Activated CD4-positive, alpha-beta T cell treated with anti-CD3 and anti-CD28 coated beads for 36 hours (primary cell): ENCODE measurements at regions of chr6 and their contacts with region 1.

Region 1: GRCh38 chr6:34196126-34196830 is 40.4 kb upstream of the HMGA1 start:
- DNase-seq: peak; percentile 93
- ATAC-seq: peak; percentile 94
- H3K4me3 Mint-ChIP-seq: peak overlapping the region; percentile 73
- H3K27ac Mint-ChIP-seq: peak overlapping the region; percentile 80
- H3K4me1 Mint-ChIP-seq: peaks cover 11% of the 10 kb centered on the region
- H3K27me3 Mint-ChIP-seq: no peaks in the 10 kb centered on the region

Region 2: DNA sequence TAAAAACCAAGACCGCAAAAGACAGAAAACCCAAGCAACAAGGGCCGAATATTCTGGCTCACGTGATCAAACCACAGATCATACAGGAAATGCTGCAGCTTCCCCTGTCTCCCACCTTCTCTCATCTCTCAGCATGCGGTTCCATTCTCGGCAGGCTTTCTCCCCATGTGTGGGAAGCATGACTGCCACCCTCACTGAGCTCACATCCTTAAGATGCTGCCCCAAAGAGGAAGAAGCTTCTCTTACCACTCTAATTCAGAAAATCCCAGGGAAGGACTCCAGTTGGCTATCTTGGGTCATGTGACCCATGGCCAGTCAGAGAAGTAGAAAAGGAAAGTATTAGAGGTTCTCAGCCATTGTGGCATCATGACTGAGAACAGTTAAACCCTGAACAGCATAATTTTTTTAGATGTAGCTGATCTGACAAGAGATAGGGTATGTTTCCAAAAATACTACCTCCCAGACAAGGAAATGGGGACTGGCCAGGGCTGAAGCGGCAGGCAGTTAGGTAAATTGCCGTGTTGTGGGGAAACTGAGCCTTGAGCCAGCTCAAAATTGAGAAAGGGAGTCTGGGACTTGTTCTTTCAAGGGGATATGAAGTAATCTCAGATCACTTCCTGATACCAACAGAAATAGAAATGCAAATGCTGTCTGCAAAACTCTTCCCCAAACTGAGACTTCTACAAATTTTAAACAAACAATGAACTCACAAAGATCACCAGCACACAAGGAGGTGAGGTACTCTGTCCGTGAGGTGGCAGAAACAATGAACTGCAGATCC is 13.3 kb before region 1 on chr6:
- CTCF ChIA-PET with region 1: interaction called, 20 read pairs
- POLR2A ChIA-PET with region 1: interaction called, 4 read pairs
- intact Hi-C with region 1: no loop called
- DNase-seq: peak; percentile 78
- ATAC-seq: peak; percentile 95
- H3K4me3 Mint-ChIP-seq: peak overlapping the region; percentile 65
- H3K27ac Mint-ChIP-seq: peak overlapping the region; percentile 95
- H3K4me1 Mint-ChIP-seq: peaks cover 20% of the 10 kb centered on the region
- H3K27me3 Mint-ChIP-seq: no peaks in the 10 kb centered on the region

Region 3: DNA sequence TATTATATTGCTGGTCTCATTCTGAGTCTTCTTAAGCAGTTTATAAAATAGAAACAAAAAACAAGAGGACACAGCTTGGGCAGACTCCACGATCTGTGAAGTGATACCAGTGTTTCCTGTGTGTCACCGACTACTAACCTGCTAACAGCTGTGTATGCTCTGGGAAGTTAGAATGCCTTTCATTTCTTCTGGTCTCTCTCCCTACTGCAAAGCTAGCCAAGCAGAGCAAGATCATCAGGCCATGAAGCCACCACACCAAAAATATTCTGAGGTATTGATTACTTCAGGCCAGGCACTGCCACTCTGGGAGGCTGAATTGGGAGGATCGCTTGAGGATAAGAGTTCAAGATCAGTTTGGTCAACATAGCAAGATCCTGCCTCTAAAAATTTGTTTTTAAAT is 99.4 kb after region 1 on chr6:
- CTCF ChIA-PET with region 1: no interaction called
- POLR2A ChIA-PET with region 1: no interaction called
- intact Hi-C with region 1: no loop called
- DNase-seq: peak; percentile 16
- ATAC-seq: peak; percentile 74
- H3K4me3 Mint-ChIP-seq: no peak overlapping the region
- H3K27ac Mint-ChIP-seq: peak overlapping the region; percentile 1
- H3K4me1 Mint-ChIP-seq: peaks cover 8% of the 10 kb centered on the region
- H3K27me3 Mint-ChIP-seq: no peaks in the 10 kb centered on the region

Region 4: GRCh38 chr6:34312259-34312658 is 116.0 kb after region 1 on chr6:
- CTCF ChIA-PET with region 1: no interaction called
- POLR2A ChIA-PET with region 1: no interaction called
- intact Hi-C with region 1: no loop called
- DNase-seq: no peak
- ATAC-seq: no peak
- H3K4me3 Mint-ChIP-seq: no peak overlapping the region
- H3K27ac Mint-ChIP-seq: no peak overlapping the region
- H3K4me1 Mint-ChIP-seq: peaks cover 32% of the 10 kb centered on the region
- H3K27me3 Mint-ChIP-seq: no peaks in the 10 kb centered on the region

Region 5: DNA sequence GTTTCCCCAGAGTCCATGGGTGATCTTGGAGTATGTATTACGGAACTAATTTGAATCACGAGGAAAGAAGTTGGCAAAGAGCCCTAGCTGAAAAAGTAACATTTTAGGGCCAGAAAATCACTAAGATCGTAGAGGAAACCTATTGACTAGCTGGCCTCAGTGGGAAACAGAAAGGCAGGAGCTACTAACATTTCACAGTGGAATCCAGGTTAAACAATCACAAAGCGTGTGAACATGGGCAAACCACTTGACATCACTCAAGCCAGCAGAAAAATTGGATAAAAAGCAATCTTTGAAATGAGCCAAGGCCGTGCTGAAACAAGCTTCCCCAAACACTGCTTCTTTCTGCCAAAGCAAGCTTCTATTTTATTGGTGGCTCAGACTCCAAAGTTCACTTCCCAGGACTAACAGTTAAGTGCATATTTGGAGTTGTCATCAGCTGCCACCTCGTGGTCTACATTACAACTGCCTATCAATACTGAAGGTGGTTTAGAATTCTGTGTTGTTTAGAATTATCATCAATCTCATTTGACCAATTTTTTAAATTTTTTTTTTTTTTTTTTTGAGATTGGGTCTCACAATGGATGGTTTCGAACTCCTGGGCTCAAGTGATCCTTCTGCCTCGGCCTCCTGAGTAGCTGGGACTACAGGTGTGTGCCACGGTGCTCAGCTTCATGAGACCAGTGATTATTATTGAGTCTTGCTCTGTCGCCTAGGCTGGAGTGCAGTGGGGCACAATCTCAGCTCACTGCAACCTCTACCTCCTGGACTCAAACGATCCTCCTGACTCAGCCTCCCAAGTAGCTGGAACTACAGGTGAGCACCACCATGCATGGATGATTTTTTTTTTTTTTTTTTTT is 219.0 kb after region 1 on chr6:
- CTCF ChIA-PET with region 1: interaction called, 16 read pairs
- POLR2A ChIA-PET with region 1: no interaction called
- intact Hi-C with region 1: loop called (anchors 1 kb)
- DNase-seq: peak; percentile 48
- ATAC-seq: peak; percentile 57
- H3K4me3 Mint-ChIP-seq: no peak overlapping the region
- H3K27ac Mint-ChIP-seq: peak overlapping the region; percentile 51
- H3K4me1 Mint-ChIP-seq: peaks cover 15% of the 10 kb centered on the region
- H3K27me3 Mint-ChIP-seq: no peaks in the 10 kb centered on the region

Region 6: GRCh38 chr6:35391240-35391968 is 1195.1 kb after region 1 on chr6:
- CTCF ChIA-PET with region 1: no interaction called
- POLR2A ChIA-PET with region 1: no interaction called
- intact Hi-C with region 1: no loop called
- DNase-seq: no peak
- ATAC-seq: peak; percentile 37
- H3K4me3 Mint-ChIP-seq: no peak overlapping the region
- H3K27ac Mint-ChIP-seq: no peak overlapping the region
- H3K4me1 Mint-ChIP-seq: peaks cover 52% of the 10 kb centered on the region
- H3K27me3 Mint-ChIP-seq: no peaks in the 10 kb centered on the region